ENCODE measurements at regions of chr14 and their contacts with region 1.

Region 1: GRCh38 chr14:74501135-74501614 is 7.6 kb downstream of the ISCA2 start:
- DNase-seq: peak; percentile 89 to 93 (median 92)
- H3K4me3 ChIP-seq: no peak overlapping the region
- H3K27ac ChIP-seq: no peak overlapping the region
- H3K4me1 ChIP-seq: peaks cover 3% of the 10 kb centered on the region
- H3K27me3 ChIP-seq: no peaks in the 10 kb centered on the region
- CTCF ChIP-seq: peak; percentile 73 to 81 (median 77)
- EP300 ChIP-seq: no peak
- POLR2A ChIP-seq: no peak

Region 2: DNA sequence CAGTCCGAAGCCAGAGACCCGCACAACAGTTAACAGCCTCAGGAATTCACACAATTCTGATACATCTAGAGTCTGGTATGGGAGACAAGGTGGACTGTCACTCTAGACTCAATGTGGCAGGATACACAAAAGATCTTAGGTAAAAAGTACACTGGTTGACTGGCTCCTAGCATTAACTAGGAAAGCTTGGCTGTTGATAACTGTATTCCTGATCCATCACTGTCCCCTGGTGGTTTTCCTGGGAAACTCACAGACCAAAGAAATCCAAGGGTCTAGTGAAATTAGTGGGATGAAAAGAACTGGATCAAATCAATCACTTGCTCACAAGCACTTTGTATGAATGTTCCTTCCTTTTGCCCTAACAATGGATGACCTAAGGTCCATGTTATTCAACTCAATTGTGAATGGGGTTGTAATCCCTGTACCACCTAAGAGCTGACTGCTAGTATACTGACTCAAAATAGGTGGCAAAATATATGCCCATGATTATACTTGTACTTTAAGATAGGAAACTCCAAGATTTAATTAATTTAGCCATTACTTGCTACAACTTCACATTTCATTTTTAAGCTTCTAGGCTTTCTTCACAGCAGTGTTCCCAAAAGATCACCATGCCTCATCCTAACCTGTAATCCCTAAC is 22.1 kb before region 1 on chr14:
- intact Hi-C with region 1: no loop called
- DNase-seq: no peak
- H3K4me3 ChIP-seq: no peak overlapping the region
- H3K27ac ChIP-seq: no peak overlapping the region
- H3K4me1 ChIP-seq: no peaks in the 10 kb centered on the region
- H3K27me3 ChIP-seq: no peaks in the 10 kb centered on the region
- CTCF ChIP-seq: no peak
- EP300 ChIP-seq: no peak
- POLR2A ChIP-seq: no peak

Region 3: GRCh38 chr14:74604911-74605310 is 103.7 kb after region 1 on chr14:
- intact Hi-C with region 1: loop called in 3 of 4 experiments (anchors 2 to 5 kb)
- DNase-seq: peak in 2 of 5 donors; percentile 24 to 42
- H3K4me3 ChIP-seq: no peak overlapping the region
- H3K27ac ChIP-seq: peak overlapping the region; percentile 16 to 56
- H3K4me1 ChIP-seq: peaks cover 31% of the 10 kb centered on the region
- H3K27me3 ChIP-seq: no peaks in the 10 kb centered on the region
- CTCF ChIP-seq: no peak
- EP300 ChIP-seq: no peak
- POLR2A ChIP-seq: no peak

Region 4: DNA sequence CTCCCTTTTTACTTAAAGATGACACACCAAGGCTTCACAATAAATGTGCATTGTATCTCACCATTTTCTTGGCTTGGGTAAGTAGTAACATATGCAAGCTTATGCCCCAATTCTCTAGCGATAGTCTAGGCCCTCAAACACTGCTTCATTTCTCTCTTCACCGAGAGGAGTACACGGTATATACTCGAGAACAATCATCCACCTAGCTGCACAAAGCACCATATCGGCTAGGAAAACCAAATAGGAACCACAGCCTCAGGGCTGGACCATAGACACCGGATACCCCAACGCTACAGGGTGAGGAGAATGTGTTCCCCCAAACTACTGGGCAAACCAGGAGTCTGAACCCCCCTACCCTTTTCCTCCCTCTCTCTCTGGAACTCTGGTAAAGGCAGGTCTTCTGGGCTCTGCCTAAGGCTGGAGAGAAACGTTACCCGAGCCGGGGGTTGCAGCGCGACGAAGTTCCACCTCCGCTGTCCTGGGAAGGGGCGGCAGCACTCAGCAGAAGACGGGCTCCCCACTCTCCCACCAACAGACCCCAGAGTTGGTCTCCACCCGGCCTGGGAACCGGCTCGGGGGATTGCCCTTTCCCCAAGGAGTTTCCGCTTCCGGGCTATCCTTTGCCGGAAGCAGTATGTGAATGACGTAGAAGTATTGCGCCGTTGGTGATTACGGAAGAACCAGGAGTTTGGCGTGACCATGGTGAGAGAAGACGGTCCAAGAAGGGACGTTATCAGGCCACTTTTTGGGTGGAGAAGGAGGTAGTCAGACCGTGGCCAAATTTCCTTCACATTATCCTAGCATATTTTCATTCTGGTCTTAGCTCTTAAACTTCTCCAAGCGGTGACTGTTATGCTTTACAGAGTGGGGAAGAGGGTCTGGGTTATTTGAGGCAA is 211.6 kb after region 1 on chr14 and contains the starts of genes AREL1 and FCF1:
- intact Hi-C with region 1: loop called in 1 of 4 experiments (anchors 10 kb)
- DNase-seq: peak; percentile 74 to 85 (median 75)
- H3K4me3 ChIP-seq: peak within 1 kb of the TSS; percentile 86
- H3K27ac ChIP-seq: peak within 1 kb of the TSS; percentile 54 to 55
- H3K4me1 ChIP-seq: peaks cover 4% of the 10 kb centered on the region
- H3K27me3 ChIP-seq: no peaks in the 10 kb centered on the region
- CTCF ChIP-seq: no peak
- EP300 ChIP-seq: peak; percentile 27
- POLR2A ChIP-seq: peak; percentile 75
- total RNA-seq, gene AREL1: 14.8 to 38.1 (median 26.5) TPM
- total RNA-seq, gene FCF1: 19.8 to 60.8 (median 43.1) TPM